ENCODE measurements at regions of chrX and their contacts with region 1.

Region 1: GRCh38 chrX:77431227-77431626 is 16.0 kb upstream of the FGF16 start:
- DNase-seq: no peak
- ATAC-seq: peak; percentile 67

Region 2: DNA sequence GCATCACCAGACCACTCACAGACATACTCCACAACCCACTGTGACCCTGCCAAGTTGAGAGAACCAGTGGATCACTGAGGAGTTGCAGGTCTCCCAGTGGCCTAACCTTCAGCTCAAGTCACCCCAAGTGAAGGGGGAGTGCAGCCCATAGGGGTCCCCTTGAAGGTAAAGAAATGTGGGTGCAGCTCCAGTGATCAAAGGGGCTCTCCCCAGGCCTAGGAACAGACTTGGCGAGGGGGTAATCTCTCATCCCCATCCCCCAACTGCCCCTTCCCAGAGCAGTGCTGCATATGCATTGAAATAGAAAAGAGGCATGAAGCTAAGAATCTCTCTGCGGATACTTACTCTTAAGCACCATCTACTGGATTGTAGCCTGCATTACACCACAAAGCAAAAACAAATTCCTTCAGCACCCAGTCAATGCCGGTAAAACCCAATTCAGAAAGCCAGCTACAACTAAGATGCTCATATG is 976.7 kb before region 1 on chrX:
- intact Hi-C with region 1: loop called (anchors 10 kb)
- DNase-seq: no peak
- ATAC-seq: no peak

Region 3: GRCh38 chrX:78437621-78438020 is 1006.4 kb after region 1 on chrX:
- intact Hi-C with region 1: no loop called
- DNase-seq: no peak
- ATAC-seq: no peak

Measured in sciatic nerve (tissue), 2 donors.